ENCODE measurements at regions of chr19 and their contacts with region 1.

Region 1: DNA sequence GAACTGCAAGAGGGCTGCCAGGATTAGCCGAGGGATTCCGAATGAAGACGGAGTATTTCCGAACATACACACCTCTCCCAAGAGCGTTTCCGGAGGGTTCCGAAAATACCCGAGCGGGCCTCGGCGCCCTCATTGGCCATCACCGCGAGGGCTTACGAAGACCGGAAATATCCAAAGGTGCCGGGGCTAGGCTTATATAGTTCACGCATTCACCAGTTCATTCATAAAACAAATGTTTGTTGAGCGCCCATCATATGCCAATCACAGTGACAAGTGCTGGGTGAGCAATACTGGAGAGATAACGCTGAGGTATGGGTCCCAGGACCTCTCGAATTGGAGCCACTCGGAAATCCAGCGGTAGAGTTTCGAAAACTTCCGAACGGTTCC is 386 bp upstream of the RPL28 start:
- DNase-seq: peak; percentile 98
- ATAC-seq: peak; percentile 82
- H3K4me3 Mint-ChIP-seq: peak overlapping the region; percentile 100
- H3K27ac Mint-ChIP-seq: peak overlapping the region; percentile 99
- H3K4me1 Mint-ChIP-seq: peaks cover 43% of the 10 kb centered on the region
- H3K27me3 Mint-ChIP-seq: peaks cover 24% of the 10 kb centered on the region
- CTCF ChIP-seq: no peak

Region 2: GRCh38 chr19:55199623-55200204 is 185.6 kb before region 1 on chr19:
- CTCF ChIA-PET with region 1: no interaction called
- POLR2A ChIA-PET with region 1: interaction called, 10 read pairs
- DNase-seq: no peak
- ATAC-seq: no peak
- H3K4me3 Mint-ChIP-seq: no peak overlapping the region
- H3K27ac Mint-ChIP-seq: no peak overlapping the region
- H3K4me1 Mint-ChIP-seq: no peaks in the 10 kb centered on the region
- H3K27me3 Mint-ChIP-seq: peaks cover 37% of the 10 kb centered on the region
- CTCF ChIP-seq: no peak

Region 3: DNA sequence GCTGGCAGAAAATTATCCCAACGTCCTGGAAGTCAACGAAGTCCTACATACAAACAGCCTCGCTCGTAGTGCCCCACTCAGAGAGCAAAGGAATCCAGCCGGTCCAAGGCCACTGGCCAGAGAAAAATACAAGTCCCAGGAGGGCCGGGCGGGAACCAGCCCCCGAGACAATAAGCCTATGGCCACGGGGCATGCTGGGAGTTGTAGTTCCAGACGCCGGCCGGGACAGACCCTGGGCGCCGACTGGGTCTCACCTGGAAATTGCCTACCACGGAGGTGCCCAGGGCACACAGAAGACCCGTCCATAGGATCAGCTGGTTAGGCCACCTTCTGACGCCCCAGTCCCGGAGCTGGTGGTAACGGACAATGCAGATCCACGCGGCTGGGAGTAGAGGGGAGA is 65.6 kb before region 1 on chr19:
- CTCF ChIA-PET with region 1: interaction called, 10 read pairs
- POLR2A ChIA-PET with region 1: no interaction called
- DNase-seq: peak; percentile 93
- ATAC-seq: peak; percentile 98
- H3K4me3 Mint-ChIP-seq: peak overlapping the region; percentile 71
- H3K27ac Mint-ChIP-seq: peak overlapping the region; percentile 39
- H3K4me1 Mint-ChIP-seq: peaks cover 18% of the 10 kb centered on the region
- H3K27me3 Mint-ChIP-seq: peaks cover 27% of the 10 kb centered on the region
- CTCF ChIP-seq: no peak

Region 4: GRCh38 chr19:55348317-55349034 is 36.9 kb before region 1 on chr19:
- CTCF ChIA-PET with region 1: interaction called, 12 read pairs
- POLR2A ChIA-PET with region 1: interaction called, 17 read pairs
- DNase-seq: peak; percentile 50
- ATAC-seq: peak; percentile 38
- H3K4me3 Mint-ChIP-seq: peak overlapping the region; percentile 52
- H3K27ac Mint-ChIP-seq: peak overlapping the region; percentile 96
- H3K4me1 Mint-ChIP-seq: peaks cover 57% of the 10 kb centered on the region
- H3K27me3 Mint-ChIP-seq: peaks cover 32% of the 10 kb centered on the region
- CTCF ChIP-seq: no peak

Region 5: GRCh38 chr19:55369671-55370304 is 15.6 kb before region 1 on chr19:
- CTCF ChIA-PET with region 1: interaction called, 10 read pairs
- POLR2A ChIA-PET with region 1: interaction called, 4 read pairs
- DNase-seq: peak; percentile 82
- ATAC-seq: peak; percentile 76
- H3K4me3 Mint-ChIP-seq: peak overlapping the region; percentile 83
- H3K27ac Mint-ChIP-seq: no peak overlapping the region; the same call in 1 of the 2 replicates
- H3K4me1 Mint-ChIP-seq: peaks cover 19% of the 10 kb centered on the region
- H3K27me3 Mint-ChIP-seq: peaks cover 75% of the 10 kb centered on the region
- CTCF ChIP-seq: no peak

Region 6: DNA sequence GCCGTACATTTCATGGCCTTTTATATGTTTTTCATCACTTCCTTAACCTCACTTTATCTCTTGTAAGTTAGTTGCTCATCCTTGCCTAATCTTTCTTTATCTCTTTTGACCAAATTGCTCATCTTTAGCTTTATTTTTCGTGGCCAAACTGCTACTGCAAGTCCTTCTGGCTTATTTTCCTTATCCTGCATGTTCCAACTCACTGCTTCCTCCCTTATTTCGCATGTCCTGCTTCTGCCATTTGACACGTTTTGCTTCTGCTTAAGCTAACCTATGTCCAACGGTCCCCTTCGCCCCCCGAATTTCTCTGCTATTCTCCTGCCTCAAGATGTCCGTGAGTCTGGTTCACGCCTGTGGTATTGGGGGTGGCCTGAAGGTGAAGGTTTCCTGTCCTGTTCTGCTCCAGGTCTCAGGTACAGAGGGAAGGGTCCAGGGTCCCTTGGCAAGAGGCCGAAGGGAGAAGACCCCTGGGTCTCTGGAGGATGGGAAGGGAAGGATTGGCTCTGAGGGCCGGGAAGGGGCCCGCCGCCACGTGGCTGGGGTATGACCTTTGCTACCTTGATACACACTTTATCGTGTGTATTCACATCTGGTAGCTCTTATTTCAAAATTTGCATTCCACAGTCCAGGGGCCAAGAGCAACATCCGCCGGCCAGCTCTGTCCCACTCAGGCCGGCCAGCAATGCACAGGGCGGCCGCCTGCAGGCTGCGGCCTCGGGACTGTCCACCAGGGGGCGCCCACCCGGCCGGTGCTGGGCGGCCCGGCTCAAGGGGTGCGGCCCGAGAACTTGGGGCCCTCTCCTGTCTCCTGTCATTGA is 82.1 kb after region 1 on chr19:
- CTCF ChIA-PET with region 1: no interaction called
- POLR2A ChIA-PET with region 1: no interaction called
- DNase-seq: peak; percentile 77
- ATAC-seq: peak; percentile 78
- H3K4me3 Mint-ChIP-seq: no peak overlapping the region
- H3K27ac Mint-ChIP-seq: no peak overlapping the region
- H3K4me1 Mint-ChIP-seq: peaks cover 27% of the 10 kb centered on the region
- H3K27me3 Mint-ChIP-seq: peaks cover 33% of the 10 kb centered on the region
- CTCF ChIP-seq: peak; percentile 98

Region 7: GRCh38 chr19:55497763-55498162 is 112.4 kb after region 1 on chr19:
- CTCF ChIA-PET with region 1: no interaction called
- POLR2A ChIA-PET with region 1: no interaction called
- DNase-seq: no peak
- ATAC-seq: no peak
- H3K4me3 Mint-ChIP-seq: no peak overlapping the region
- H3K27ac Mint-ChIP-seq: no peak overlapping the region
- H3K4me1 Mint-ChIP-seq: no peaks in the 10 kb centered on the region; the same call in 1 of the 2 replicates
- H3K27me3 Mint-ChIP-seq: peaks cover 54% of the 10 kb centered on the region
- CTCF ChIP-seq: no peak

Region 8: GRCh38 chr19:55516878-55517620 is 131.7 kb after region 1 on chr19:
- CTCF ChIA-PET with region 1: no interaction called
- POLR2A ChIA-PET with region 1: no interaction called
- DNase-seq: peak; percentile 96
- ATAC-seq: peak; percentile 99
- H3K4me3 Mint-ChIP-seq: peak overlapping the region; percentile 58
- H3K27ac Mint-ChIP-seq: no peak overlapping the region
- H3K4me1 Mint-ChIP-seq: no peaks in the 10 kb centered on the region
- H3K27me3 Mint-ChIP-seq: peaks cover 24% of the 10 kb centered on the region
- CTCF ChIP-seq: peak; percentile 32; the same call in 1 of the 2 replicates

Region 9: DNA sequence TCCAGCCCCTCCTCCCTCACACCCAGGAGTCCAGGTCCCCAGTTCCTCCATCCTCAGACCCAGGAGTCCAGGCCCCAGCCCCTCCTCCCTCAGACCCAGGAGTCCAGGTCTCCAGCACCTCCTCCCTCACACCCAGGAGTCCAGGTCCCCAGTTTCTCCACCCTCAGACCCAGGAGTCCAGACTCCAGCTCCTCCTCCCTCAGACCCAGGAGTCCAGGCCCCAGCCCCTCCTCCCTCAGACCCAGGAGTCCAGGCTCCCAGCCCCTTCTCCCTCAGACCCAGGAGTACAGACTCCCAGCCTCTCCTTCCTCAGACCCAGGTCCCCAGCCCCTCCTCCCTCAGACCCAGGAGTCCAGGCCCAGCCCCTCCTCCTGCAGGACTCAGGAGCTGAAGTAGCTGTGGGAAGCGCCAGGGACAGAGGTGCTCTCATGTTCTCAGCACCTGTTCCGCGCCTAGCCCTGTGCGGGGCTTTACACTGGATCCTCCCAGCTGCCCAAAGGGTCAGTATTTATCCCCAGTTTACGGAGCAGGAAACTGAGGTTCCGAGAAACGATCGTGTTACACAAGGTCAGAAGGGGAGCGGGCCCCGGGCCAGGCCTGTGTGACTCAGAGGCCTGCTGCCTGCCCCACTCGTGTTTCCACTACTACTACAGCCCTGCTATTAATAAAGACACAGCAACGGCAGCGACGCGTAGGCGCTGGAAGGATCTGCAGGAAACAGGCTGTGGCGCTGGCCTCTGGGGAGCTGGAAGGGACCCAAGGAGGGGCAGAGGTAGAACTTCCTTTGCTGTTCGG is 161.7 kb after region 1 on chr19:
- CTCF ChIA-PET with region 1: no interaction called
- POLR2A ChIA-PET with region 1: no interaction called
- DNase-seq: no peak
- ATAC-seq: no peak
- H3K4me3 Mint-ChIP-seq: no peak overlapping the region
- H3K27ac Mint-ChIP-seq: peak overlapping the region; percentile 68
- H3K4me1 Mint-ChIP-seq: peaks cover 30% of the 10 kb centered on the region
- H3K27me3 Mint-ChIP-seq: peaks cover 2% of the 10 kb centered on the region; the same call in 1 of the 2 replicates
- CTCF ChIP-seq: no peak